ENCODE measurements at regions of chr2 and their contacts with region 1.

Region 1: GRCh38 chr2:94986392-94986963 is 39.0 kb upstream of the MAL start:
- DNase-seq: peak; percentile 14

Region 2: DNA sequence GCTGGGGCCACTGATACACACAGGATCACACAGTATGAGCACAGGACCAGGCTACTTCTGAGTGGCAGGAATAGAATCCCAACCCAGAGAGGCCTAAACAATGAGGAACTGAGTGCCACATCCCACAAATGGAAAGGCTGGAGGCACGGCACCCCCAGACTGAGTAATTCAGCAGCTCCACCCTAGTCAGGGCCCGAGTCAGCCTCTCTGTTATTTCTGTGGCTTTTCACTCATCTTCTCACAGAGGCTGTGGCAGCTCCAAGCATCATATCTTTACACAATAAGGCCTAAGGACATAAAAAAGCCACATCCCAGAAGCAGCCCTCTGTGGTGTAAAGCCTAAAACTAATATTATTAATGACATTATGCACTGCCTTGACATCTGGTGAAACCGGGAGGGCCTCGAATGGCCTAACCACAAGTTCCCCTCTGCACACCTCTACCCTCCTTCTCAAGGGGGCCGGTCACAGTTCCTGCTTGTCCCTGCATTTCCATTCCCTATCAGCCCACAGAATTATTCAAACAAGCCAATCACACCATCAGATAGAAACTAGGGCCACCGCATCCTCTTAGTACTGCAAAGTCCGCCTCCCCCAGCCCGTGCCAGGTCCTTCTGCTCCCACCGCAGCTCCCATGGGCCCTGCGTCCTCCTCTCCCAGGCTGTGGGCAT is 26.5 kb after region 1 on chr2:
- intact Hi-C with region 1: no loop called
- DNase-seq: peak; percentile 39

Region 3: GRCh38 chr2:95115418-95115817 is 128.9 kb after region 1 on chr2:
- intact Hi-C with region 1: loop called (anchors 5 kb)
- DNase-seq: peak; percentile 85